ENCODE measurements at regions of chr10 and their contacts with region 1.

Region 1: DNA sequence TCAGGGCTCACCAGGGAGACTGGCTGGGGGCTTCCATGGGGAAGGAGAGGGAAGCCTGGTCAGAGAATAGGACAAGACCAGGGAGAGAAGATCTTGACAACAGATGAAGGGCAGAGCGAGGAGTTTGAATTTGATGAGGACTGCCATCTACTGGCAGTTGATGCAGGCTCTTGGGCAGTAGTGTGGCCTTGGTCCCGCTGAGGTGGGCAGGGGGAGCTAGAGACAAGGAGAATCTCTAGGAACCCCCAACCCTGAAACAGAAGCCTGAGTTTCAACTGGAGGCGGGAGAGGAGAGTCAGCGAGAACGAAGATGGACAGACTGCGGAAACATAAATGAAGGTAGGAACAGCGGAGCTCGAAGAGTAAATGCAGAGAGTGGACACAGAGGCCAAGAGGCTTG is 81.0 kb downstream of the PPP1R3C start:
- DNase-seq: peak; percentile 78
- H3K4me3 ChIP-seq: no peak overlapping the region
- H3K27ac ChIP-seq: no peak overlapping the region
- H3K4me1 ChIP-seq: no peaks in the 10 kb centered on the region
- H3K27me3 ChIP-seq: peaks cover 0 to 1% of the 10 kb centered on the region in 2 experiments
- CTCF ChIP-seq: peak; percentile 68 to 87
- POLR2A ChIP-seq: no peak

Region 2: GRCh38 chr10:90879062-90879461 is 672.8 kb before region 1 on chr10:
- CTCF ChIA-PET with region 1: interaction called, 12 read pairs
- POLR2A ChIA-PET with region 1: no interaction called
- dilution Hi-C with region 1: no loop called
- intact Hi-C with region 1: no loop called
- DNase-seq: no peak
- H3K4me3 ChIP-seq: no peak overlapping the region
- H3K27ac ChIP-seq: no peak overlapping the region
- H3K4me1 ChIP-seq: no peaks in the 10 kb centered on the region
- H3K27me3 ChIP-seq: no peaks in the 10 kb centered on the region
- CTCF ChIP-seq: no peak
- POLR2A ChIP-seq: no peak

Region 3: GRCh38 chr10:91381257-91381891 is 170.5 kb before region 1 on chr10:
- CTCF ChIA-PET with region 1: interaction called, 18 read pairs
- POLR2A ChIA-PET with region 1: no interaction called
- dilution Hi-C with region 1: no loop called
- intact Hi-C with region 1: no loop called
- DNase-seq: no peak
- H3K4me3 ChIP-seq: no peak overlapping the region
- H3K27ac ChIP-seq: no peak overlapping the region
- H3K4me1 ChIP-seq: peaks cover 3% of the 10 kb centered on the region
- H3K27me3 ChIP-seq: peaks cover 13 to 35% of the 10 kb centered on the region in 2 experiments
- CTCF ChIP-seq: no peak
- POLR2A ChIP-seq: no peak

Region 4: DNA sequence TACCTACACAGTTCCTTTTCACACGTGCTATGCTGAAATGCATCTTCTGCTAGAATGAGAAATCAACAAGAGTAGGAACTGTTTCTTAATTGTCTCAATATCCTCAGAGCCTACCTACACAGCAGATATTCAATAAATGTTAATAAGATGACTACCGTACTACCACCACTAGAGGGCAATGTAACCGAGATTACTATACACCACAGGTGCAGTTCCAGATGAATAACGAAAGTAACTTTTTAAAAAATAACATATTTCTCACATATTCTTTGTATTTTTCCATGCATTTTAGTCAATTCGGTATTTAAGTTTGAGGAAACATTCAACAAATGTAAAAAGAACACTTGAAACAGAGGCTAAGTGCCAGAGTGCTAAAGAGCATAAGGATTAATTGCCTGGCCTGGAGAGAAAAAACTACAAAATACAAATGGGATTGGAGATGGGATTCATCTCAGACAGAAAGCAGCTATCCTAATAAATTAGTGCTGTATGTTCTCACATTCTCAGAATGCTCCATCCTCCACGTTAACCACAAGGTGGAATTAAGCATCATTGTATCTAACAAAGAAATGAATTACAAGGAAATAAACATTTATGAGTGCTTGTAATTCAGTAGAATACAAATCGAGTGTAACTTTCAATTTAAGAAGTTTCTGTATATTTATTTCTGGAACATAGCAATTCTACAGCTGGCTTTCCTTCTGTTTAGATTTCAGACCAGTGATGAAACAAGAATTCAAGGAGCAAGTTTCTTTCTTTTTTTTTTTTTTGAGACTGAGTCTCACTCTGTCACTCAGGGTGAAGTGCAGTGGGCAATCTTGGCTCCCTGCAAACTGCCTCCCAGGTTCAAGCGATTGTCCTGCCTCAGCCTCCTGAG is 162.0 kb before region 1 on chr10:
- CTCF ChIA-PET with region 1: interaction called, 18 read pairs
- POLR2A ChIA-PET with region 1: no interaction called
- dilution Hi-C with region 1: no loop called
- intact Hi-C with region 1: loop called (anchors 1 kb)
- DNase-seq: peak; percentile 64
- H3K4me3 ChIP-seq: peak overlapping the region in 1 of 3 experiments; percentile 27
- H3K27ac ChIP-seq: no peak overlapping the region
- H3K4me1 ChIP-seq: peaks cover 5% of the 10 kb centered on the region
- H3K27me3 ChIP-seq: peaks cover 14 to 31% of the 10 kb centered on the region in 2 experiments
- CTCF ChIP-seq: peak; percentile 27 to 28
- POLR2A ChIP-seq: no peak

Region 5: DNA sequence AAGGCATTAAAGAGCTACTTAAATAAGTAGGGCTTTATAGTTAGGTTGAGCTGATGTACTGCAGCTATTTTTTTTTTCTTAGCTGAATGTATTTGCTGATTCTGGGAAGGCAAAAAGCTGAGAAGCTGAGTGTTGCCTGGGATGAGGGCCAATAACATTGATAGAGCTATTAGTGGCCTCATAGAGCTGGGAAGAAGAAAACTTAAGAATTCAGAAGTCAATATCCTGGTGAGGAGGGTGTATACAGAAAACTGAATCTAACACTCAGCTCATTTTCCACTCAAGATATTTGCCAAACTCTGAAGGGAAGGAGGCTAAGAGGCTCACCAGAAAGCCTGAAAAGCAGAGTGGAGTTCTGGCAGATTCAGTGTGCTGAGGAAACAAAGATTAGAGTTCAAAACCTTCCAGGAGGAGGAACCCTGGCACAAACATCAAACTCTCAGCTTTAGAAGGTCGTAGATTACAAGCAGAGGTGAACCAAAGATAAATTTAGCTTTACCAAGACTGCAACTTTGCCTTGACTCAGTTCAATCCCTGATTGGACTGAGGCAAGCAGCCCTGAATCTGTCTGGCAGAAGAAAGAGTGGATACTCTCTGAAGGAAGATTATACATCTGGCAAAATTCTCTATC is 69.7 kb after region 1 on chr10:
- CTCF ChIA-PET with region 1: interaction called, 12 read pairs
- POLR2A ChIA-PET with region 1: no interaction called
- dilution Hi-C with region 1: no loop called
- intact Hi-C with region 1: no loop called
- DNase-seq: no peak
- H3K4me3 ChIP-seq: no peak overlapping the region
- H3K27ac ChIP-seq: no peak overlapping the region
- H3K4me1 ChIP-seq: peaks cover 4% of the 10 kb centered on the region
- H3K27me3 ChIP-seq: no peaks in the 10 kb centered on the region
- CTCF ChIP-seq: no peak
- POLR2A ChIP-seq: no peak

Region 6: DNA sequence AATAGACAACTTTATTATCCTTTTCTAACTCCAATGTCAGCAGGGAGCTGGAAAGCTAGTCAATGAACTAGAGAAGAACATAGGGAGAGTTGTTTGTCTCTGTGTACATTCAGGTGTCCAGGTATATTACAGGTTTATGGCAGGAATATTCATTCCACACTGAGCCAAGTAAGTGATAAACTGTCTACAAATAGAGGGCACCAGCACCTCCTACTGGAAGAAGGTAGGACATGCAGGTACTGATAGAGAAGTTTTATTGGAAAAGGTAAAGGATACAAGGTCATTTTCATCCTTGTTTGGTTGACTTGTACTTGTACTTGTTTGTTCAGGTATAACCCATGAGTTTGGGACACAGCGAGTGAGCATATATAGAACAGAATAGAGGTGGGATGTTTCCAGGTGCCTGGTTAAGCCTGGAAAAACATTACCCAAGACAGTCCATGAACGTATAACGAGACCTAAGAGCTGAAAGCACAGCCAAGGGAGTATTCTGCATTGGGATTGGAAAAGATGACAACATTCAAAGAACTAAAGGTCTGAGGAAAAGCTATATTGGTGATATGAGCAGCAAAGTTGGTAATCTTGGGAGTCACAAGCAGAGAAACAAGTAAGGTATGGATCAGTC is 142.4 kb after region 1 on chr10:
- CTCF ChIA-PET with region 1: interaction called, 6 read pairs
- POLR2A ChIA-PET with region 1: no interaction called
- dilution Hi-C with region 1: no loop called
- intact Hi-C with region 1: loop called (anchors 1 kb)
- DNase-seq: peak; percentile 48
- H3K4me3 ChIP-seq: no peak overlapping the region
- H3K27ac ChIP-seq: no peak overlapping the region
- H3K4me1 ChIP-seq: no peaks in the 10 kb centered on the region
- H3K27me3 ChIP-seq: peaks cover 3 to 4% of the 10 kb centered on the region in 2 experiments
- CTCF ChIP-seq: peak; percentile 58 to 65
- POLR2A ChIP-seq: no peak

Measured in endothelial cell of umbilical vein (primary cell).